ENCODE measurements at regions of chr4 and their contacts with region 1.

Region 1: GRCh38 chr4:67871867-67872266 is 11.9 kb downstream of the TMPRSS11D start:
- DNase-seq: peak; percentile 61
- ATAC-seq: peak; percentile 98
- H3K4me3 ChIP-seq: no peak overlapping the region
- H3K27ac ChIP-seq: no peak overlapping the region
- H3K4me1 ChIP-seq: 0 out of 2 replicates have a peak, but pooled peaks cover 2% of the 10 kb centered on the region
- H3K27me3 ChIP-seq: no peaks in the 10 kb centered on the region
- CTCF ChIP-seq: peak; percentile 85
- POLR2A ChIP-seq: no peak
- RAD21 ChIP-seq: peak; percentile 82

Region 2: DNA sequence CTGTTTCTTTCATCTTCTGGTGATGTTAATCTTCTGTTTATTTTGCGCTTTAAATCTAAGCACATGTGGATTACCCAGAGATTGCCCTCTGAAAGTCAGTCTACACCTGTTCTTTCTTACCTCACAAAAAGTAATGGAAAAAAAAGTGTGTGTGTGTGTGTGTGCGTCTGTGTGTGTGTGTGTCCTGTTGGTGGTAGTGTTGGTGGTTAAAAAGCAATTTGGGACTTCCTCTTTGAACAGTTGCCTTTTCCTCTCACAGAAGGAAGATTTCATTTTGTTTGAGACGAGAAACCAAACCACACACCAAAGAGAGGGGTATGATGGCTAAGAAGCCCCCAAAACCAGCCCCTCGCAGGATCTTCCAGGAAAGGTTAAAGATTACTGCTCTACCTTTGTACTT is 313.4 kb before region 1 on chr4 and contains the start of gene STAP1:
- CTCF ChIA-PET with region 1: no interaction called
- POLR2A ChIA-PET with region 1: no interaction called
- dilution Hi-C with region 1: no loop called
- in situ Hi-C with region 1: no loop called
- intact Hi-C with region 1: no loop called
- DNase-seq: no peak
- ATAC-seq: no peak
- H3K4me3 ChIP-seq: no peak within 1 kb of the TSS
- H3K27ac ChIP-seq: no peak within 1 kb of the TSS
- H3K4me1 ChIP-seq: no peaks in the 10 kb centered on the region
- H3K27me3 ChIP-seq: no peaks in the 10 kb centered on the region
- CTCF ChIP-seq: no peak
- POLR2A ChIP-seq: no peak
- RAD21 ChIP-seq: no peak
- total RNA-seq, gene STAP1: not detected in 2 replicates

Region 3: GRCh38 chr4:67909905-67910584 is 38.2 kb after region 1 on chr4:
- CTCF ChIA-PET with region 1: interaction called, 3 read pairs
- POLR2A ChIA-PET with region 1: no interaction called
- dilution Hi-C with region 1: no loop called
- in situ Hi-C with region 1: loop called (anchors 5 kb)
- intact Hi-C with region 1: loop called (anchors 1 kb)
- DNase-seq: peak; percentile 25
- ATAC-seq: peak; percentile 62; the same call in 1 of the 2 replicates
- H3K4me3 ChIP-seq: no peak overlapping the region
- H3K27ac ChIP-seq: no peak overlapping the region
- H3K4me1 ChIP-seq: no peaks in the 10 kb centered on the region
- H3K27me3 ChIP-seq: no peaks in the 10 kb centered on the region
- CTCF ChIP-seq: peak; percentile 71
- POLR2A ChIP-seq: no peak
- RAD21 ChIP-seq: peak; percentile 60

Region 4: DNA sequence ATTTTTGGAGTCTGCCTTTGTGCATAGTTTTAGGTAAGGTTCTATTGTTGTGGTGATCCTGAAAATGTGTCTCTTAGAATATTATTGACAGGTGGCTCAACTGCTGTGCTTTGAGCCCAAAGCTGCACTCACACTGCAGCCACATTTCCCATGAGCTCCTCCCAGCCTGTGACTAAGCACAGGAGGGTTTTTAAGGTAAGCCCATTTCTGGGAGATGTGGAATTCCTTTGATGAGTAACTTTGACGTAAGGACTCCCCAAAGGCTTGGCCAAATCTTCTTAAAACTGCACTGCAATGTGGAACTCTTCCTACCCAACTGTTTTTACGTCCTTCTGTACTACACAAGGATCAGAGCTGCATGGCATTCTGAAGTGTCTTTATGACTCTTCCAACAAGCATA is 111.5 kb after region 1 on chr4:
- CTCF ChIA-PET with region 1: no interaction called
- POLR2A ChIA-PET with region 1: no interaction called
- dilution Hi-C with region 1: no loop called
- in situ Hi-C with region 1: no loop called
- intact Hi-C with region 1: loop called (anchors 2 kb)
- DNase-seq: no peak
- ATAC-seq: no peak
- H3K4me3 ChIP-seq: no peak overlapping the region
- H3K27ac ChIP-seq: no peak overlapping the region
- H3K4me1 ChIP-seq: no peaks in the 10 kb centered on the region
- H3K27me3 ChIP-seq: no peaks in the 10 kb centered on the region
- CTCF ChIP-seq: no peak
- POLR2A ChIP-seq: no peak
- RAD21 ChIP-seq: no peak